ENCODE measurements at regions of chr1 and their contacts with region 1.

Region 1: DNA sequence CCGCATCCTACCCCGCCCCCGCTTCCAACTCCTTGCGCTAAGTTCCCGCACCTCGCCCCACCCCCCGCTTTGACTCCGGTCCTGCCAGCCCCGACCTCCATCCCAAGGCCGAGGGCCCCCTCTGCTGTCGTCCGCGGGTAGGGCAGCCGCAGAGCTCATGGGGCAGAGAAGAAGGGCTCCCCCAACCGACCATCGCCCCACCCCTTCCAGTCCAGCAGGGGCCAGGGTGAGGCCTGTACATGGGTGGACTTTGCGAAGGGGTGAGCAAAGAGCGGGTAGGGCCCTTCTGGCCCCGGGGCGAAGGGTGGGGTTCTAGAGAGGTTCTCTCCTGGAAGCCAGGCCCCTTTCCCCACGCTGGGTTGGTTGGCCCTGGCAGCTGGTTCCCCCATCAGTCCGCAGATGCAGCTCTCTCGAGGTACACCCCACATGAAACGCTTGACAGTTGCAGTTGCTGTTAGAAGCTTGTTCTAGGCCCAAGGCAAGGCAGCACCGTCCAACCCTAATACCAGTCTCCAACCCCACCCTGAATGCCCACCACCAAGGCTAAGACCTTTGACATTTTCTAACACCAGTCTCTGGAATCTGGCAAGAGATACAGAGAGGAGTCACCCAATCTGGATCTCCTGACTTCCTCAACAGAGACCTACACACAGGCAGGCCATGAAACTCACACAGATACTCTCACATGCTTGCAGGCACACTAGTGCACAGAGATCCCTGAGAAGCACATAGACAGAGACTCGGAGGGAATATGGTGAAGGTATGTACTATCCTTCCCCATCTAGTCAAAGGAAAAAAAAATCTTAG is 25.3 kb upstream of the ADGRB2 start:
- DNase-seq: peak; percentile 75
- ATAC-seq: peak; percentile 86
- H3K4me3 ChIP-seq: peak overlapping the region; percentile 66 to 76
- H3K27ac ChIP-seq: no peak overlapping the region
- H3K4me1 ChIP-seq: peaks cover 3 to 22% of the 10 kb centered on the region in 2 experiments; a peak in 3 of 4 replicates
- H3K27me3 ChIP-seq: no peaks in the 10 kb centered on the region
- CTCF ChIP-seq: peak; percentile 91 to 98 (median 92)
- POLR2A ChIP-seq: no peak
- RAD21 ChIP-seq: peak; percentile 98

Region 2: GRCh38 chr1:31394628-31395193 is 394.8 kb before region 1 on chr1:
- CTCF ChIA-PET with region 1: interaction called, 13 read pairs
- POLR2A ChIA-PET with region 1: no interaction called
- RAD21 ChIA-PET with region 1: no interaction called
- intact Hi-C with region 1: no loop called
- DNase-seq: peak; percentile 71
- ATAC-seq: peak; percentile 85
- H3K4me3 ChIP-seq: peak overlapping the region; percentile 21 to 45
- H3K27ac ChIP-seq: no peak overlapping the region
- H3K4me1 ChIP-seq: peaks cover 6 to 50% of the 10 kb centered on the region in 2 experiments; a peak in 2 of 4 replicates
- H3K27me3 ChIP-seq: no peaks in the 10 kb centered on the region
- CTCF ChIP-seq: peak; percentile 81 to 94 (median 88)
- POLR2A ChIP-seq: no peak
- RAD21 ChIP-seq: peak; percentile 89

Region 3: DNA sequence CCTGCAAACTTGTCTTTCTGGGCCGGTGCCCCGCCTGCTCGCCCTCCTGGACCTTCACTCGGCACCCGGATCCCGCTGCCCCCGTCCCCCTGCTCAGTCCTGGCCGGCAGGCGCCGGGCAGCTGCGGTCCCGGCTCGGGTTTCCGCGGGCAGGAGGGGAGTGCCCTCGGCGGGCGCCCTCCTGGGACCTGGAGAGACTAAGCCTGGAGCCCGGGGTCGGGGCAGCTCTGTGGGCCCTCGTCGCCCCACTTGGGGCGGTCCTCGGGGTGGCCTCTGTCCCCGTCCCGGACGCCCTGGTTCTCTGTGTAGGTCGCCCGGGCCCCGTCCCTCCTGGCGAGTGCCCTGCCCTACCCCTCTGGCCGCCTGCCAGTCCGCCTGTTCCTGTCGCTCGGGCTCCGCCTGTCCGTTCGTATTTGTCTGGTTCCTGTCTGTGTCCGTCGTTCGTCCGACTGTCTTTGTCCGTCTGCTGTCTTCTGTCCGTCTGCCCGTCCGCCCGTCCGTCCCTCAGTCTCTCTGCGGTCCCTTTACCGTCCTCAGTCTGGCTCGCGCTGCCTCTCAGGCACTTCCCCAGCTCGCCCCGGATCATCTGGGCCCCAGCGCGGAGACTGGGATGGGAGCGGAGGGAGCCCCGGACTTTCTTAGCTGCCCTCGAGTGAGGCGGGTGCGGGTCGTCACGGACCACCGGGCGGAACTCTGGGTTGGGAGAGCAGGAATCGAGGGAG is 375.9 kb before region 1 on chr1:
- CTCF ChIA-PET with region 1: no interaction called
- POLR2A ChIA-PET with region 1: no interaction called
- RAD21 ChIA-PET with region 1: no interaction called
- intact Hi-C with region 1: no loop called
- DNase-seq: no peak
- ATAC-seq: peak; percentile 65
- H3K4me3 ChIP-seq: peak overlapping the region; percentile 84 to 98
- H3K27ac ChIP-seq: peak overlapping the region; percentile 66
- H3K4me1 ChIP-seq: peaks cover 8 to 46% of the 10 kb centered on the region in 2 experiments; a peak in 3 of 4 replicates
- H3K27me3 ChIP-seq: no peaks in the 10 kb centered on the region
- CTCF ChIP-seq: no peak
- POLR2A ChIP-seq: no peak
- RAD21 ChIP-seq: no peak

Region 4: GRCh38 chr1:31564134-31564989 is 225.1 kb before region 1 on chr1:
- CTCF ChIA-PET with region 1: interaction called, 18 read pairs
- POLR2A ChIA-PET with region 1: no interaction called
- RAD21 ChIA-PET with region 1: no interaction called
- intact Hi-C with region 1: loop called (anchors 2 kb)
- DNase-seq: no peak
- ATAC-seq: peak; percentile 64
- H3K4me3 ChIP-seq: no peak overlapping the region
- H3K27ac ChIP-seq: no peak overlapping the region
- H3K4me1 ChIP-seq: peaks cover 31 to 56% of the 10 kb centered on the region in 2 experiments
- H3K27me3 ChIP-seq: no peaks in the 10 kb centered on the region
- CTCF ChIP-seq: peak; percentile 76 to 97 (median 89)
- POLR2A ChIP-seq: no peak
- RAD21 ChIP-seq: peak; percentile 97

Region 5: GRCh38 chr1:31669786-31670592 is 119.5 kb before region 1 on chr1:
- CTCF ChIA-PET with region 1: interaction called, 105 read pairs
- POLR2A ChIA-PET with region 1: interaction called, 8 read pairs
- RAD21 ChIA-PET with region 1: interaction called, 5 to 28 read pairs
- intact Hi-C with region 1: no loop called
- DNase-seq: peak; percentile 12
- ATAC-seq: peak; percentile 78
- H3K4me3 ChIP-seq: peak overlapping the region; percentile 30 to 47
- H3K27ac ChIP-seq: peak overlapping the region; percentile 46
- H3K4me1 ChIP-seq: peaks cover 23 to 29% of the 10 kb centered on the region in 2 experiments
- H3K27me3 ChIP-seq: no peaks in the 10 kb centered on the region
- CTCF ChIP-seq: peak in 2 of 3 experiments; percentile 35 to 39; a peak in 1 of 6 replicates
- POLR2A ChIP-seq: no peak
- RAD21 ChIP-seq: no peak

Region 6: GRCh38 chr1:31745096-31745945 is 44.1 kb before region 1 on chr1:
- CTCF ChIA-PET with region 1: interaction called, 14 read pairs
- POLR2A ChIA-PET with region 1: no interaction called
- RAD21 ChIA-PET with region 1: interaction called in 1 of 2 experiments, 7 read pairs
- intact Hi-C with region 1: no loop called
- DNase-seq: no peak
- ATAC-seq: peak; percentile 95
- H3K4me3 ChIP-seq: no peak overlapping the region
- H3K27ac ChIP-seq: no peak overlapping the region
- H3K4me1 ChIP-seq: peaks cover 7 to 8% of the 10 kb centered on the region in 2 experiments; a peak in 3 of 4 replicates
- H3K27me3 ChIP-seq: no peaks in the 10 kb centered on the region
- CTCF ChIP-seq: peak; percentile 73 to 83 (median 80); a peak in 5 of 6 replicates
- POLR2A ChIP-seq: no peak
- RAD21 ChIP-seq: peak; percentile 82

Region 7: DNA sequence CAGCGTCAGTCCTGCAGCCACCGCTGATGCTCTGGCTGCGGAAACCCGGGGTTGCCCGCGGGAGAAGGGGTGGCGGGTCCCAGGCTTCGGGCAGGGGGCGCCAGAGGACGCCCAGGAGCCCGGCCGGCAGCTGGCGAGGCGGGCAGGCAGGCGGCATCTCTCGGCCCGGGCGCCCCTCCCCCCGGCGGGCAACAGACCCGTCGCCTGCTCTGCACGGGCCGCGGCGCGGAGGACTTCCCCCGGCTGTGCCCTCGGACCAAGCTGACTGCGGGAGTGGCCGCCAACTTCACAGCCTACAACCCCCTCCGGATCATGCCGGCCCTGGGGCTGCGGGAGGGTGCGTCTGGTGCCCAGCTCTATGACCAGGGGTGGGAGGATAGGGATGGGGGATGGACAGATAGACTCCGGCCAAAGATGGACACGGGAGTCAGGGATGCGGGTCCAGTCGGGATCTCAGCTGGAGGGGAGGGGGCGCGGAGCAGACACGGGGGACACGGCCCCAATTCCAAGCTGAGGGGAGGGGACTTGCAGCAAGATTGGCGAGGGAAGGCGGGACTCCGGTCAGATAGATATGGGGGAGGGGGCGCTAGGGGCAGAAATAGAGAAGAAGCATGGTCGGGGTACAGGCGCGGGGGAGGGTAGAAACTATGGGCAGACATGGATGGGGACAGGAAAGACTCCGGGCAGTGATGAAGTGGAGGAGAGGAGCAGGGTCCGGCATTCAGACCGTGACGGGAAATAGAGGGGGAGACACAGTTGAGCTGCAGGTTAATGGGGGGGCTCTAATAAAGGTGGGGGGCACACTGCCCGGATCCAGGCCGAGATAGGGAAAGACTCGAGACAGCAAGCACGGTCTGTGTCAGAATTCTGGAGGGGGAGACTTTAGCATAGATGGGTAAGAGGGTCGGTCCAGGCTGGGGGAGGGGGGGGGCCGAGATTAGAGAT is 26.5 kb before region 1 on chr1:
- CTCF ChIA-PET with region 1: interaction called, 27 read pairs
- POLR2A ChIA-PET with region 1: interaction called, 3 read pairs
- RAD21 ChIA-PET with region 1: interaction called in 1 of 2 experiments, 13 read pairs
- intact Hi-C with region 1: loop called (anchors 2 kb)
- DNase-seq: no peak
- ATAC-seq: peak; percentile 70
- H3K4me3 ChIP-seq: peak overlapping the region; percentile 61 to 71
- H3K27ac ChIP-seq: no peak overlapping the region; the same call in 1 of the 2 replicates
- H3K4me1 ChIP-seq: peaks cover 31 to 58% of the 10 kb centered on the region in 2 experiments
- H3K27me3 ChIP-seq: no peaks in the 10 kb centered on the region
- CTCF ChIP-seq: peak; percentile 56 to 75 (median 57); a peak in 5 of 6 replicates
- POLR2A ChIP-seq: no peak
- RAD21 ChIP-seq: peak; percentile 71